GM18951 (cell line): ENCODE measurements at regions of chr7 and their contacts with region 1.

Region 1: GRCh38 chr7:2232766-2233520 is at the start of gene MAD1L1:
- POLR2A ChIP-seq: peak; percentile 90

Region 2: DNA sequence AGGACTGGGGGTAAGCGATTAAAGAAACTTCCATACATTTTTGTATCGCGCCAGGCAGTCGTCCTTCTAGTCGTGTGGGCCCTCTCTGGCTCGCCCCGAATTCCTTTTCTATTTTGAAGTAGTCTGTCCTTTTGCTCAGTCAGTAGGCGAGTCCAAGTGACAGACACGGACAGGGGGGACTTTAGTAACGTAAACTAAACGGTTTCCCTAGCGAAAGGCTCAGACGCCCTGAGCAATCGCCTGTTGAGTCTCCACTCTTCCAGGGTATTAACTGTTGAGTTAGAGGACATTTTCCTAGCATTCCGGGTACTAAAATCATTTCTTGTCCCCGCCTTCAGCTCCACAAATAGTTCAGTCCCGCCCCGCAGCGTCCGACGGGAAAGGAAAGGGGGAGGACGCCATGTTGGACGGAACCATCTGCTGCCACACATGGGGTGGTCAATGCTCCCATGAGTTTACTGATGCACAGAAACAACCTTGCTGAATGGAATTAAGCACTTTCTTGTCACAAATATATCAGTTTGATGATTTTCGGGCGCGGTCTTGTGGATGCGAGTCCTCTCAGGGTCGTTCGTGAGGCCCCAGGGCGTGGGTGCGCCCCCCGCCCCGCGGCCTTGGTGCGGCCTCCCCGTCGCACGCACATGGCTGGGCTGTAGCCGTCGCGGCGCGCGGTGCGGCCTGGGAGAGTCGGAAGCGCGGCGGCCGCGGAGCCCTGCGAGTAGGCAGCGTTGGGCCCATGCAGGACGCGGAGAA is 121.4 kb after region 1 on chr7 and contains the start of gene EIF3B:
- in situ Hi-C with region 1: loop called (anchors 10 kb)
- POLR2A ChIP-seq: peak; percentile 96